ENCODE measurements at regions of chr2 and their contacts with region 1.

Region 1: GRCh38 chr2:173940208-173941020 is 24.8 kb downstream of the SP3 start:
- DNase-seq: no peak
- H3K4me3 Mint-ChIP-seq: no peak overlapping the region
- H3K27ac Mint-ChIP-seq: peak overlapping the region; percentile 7
- H3K4me1 Mint-ChIP-seq: peaks cover 69% of the 10 kb centered on the region
- H3K27me3 Mint-ChIP-seq: no peaks in the 10 kb centered on the region

Region 2: GRCh38 chr2:173955004-173955403 is 14.6 kb after region 1 on chr2:
- CTCF ChIA-PET with region 1: no interaction called
- intact Hi-C with region 1: loop called (anchors 1 kb)
- DNase-seq: no peak
- H3K4me3 Mint-ChIP-seq: no peak overlapping the region
- H3K27ac Mint-ChIP-seq: no peak overlapping the region
- H3K4me1 Mint-ChIP-seq: peaks cover 80% of the 10 kb centered on the region
- H3K27me3 Mint-ChIP-seq: no peaks in the 10 kb centered on the region